Breast epithelium (tissue), 4 donors: ENCODE measurements at regions of chr13 and their contacts with region 1.

Region 1: GRCh38 chr13:93559718-93560117 is 333.1 kb downstream of the GPC6 start:
- DNase-seq: no peak
- H3K4me3 ChIP-seq: no peak overlapping the region
- H3K27ac ChIP-seq: no peak overlapping the region
- H3K4me1 ChIP-seq: no peaks in the 10 kb centered on the region
- H3K27me3 ChIP-seq: no peaks in the 10 kb centered on the region
- CTCF ChIP-seq: no peak
- POLR2A ChIP-seq: no peak

Region 2: GRCh38 chr13:92938486-92939019 is 621.2 kb before region 1 on chr13:
- intact Hi-C with region 1: loop called (anchors 5 kb)
- DNase-seq: no peak
- H3K4me3 ChIP-seq: no peak overlapping the region
- H3K27ac ChIP-seq: no peak overlapping the region
- H3K4me1 ChIP-seq: no peaks in the 10 kb centered on the region
- H3K27me3 ChIP-seq: no peaks in the 10 kb centered on the region
- CTCF ChIP-seq: no peak
- POLR2A ChIP-seq: no peak